Activated CD4-positive, alpha-beta T cell treated with anti-CD3 and anti-CD28 coated beads for 36 hours (primary cell): ENCODE measurements at regions of chr2 and their contacts with region 1.

Region 1: GRCh38 chr2:231514103-231514950 is 15.9 kb downstream of the NMUR1 start:
- DNase-seq: peak; percentile 99
- ATAC-seq: peak; percentile 99
- H3K4me3 Mint-ChIP-seq: peak overlapping the region; percentile 83
- H3K27ac Mint-ChIP-seq: peak overlapping the region; percentile 95
- H3K4me1 Mint-ChIP-seq: peaks cover 13% of the 10 kb centered on the region
- H3K27me3 Mint-ChIP-seq: no peaks in the 10 kb centered on the region

Region 2: DNA sequence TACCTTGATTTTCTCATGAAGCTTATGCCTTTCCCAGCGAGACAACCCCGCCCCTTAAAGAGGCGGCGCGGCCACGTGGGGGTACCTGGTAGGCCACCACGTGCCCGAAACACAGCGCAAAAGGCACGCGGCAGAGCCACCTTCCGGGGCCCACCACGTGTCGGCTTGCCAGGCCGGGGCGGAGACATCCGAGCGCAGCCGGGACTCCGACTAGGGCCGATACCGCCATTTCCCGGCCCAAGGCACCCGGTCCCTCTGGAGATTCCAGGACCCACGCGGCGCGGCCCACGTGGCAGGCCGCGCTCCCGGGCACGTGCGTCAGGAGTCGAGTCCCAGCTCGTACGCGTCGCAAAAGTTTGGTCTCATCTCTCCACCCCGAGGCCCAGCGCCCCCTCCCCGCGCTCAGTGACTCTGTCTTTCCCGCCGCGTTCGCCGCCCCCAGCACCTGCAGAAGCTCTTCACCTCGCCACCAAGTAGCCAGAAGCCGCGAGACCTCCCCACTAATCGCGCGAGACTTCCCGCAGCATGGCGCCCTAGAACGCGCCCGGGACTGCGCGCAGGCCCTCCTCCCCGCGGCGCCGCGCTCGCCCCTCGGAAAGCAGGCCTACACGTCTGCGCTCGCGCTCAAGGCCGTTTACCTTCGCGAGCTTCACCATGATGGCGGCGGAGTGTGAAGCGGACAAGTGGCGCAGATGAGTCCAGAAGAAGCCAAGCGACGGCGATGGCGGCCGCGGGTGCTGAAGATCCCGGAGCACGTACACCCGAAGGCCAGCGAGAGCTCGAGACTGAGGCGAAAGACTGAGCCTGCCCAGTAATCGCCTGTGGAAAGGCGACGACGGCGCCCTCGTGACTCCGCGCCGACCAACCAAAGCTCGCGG is 50.4 kb before region 1 on chr2 and contains the start of gene NCL:
- CTCF ChIA-PET with region 1: interaction called, 5 read pairs
- POLR2A ChIA-PET with region 1: interaction called, 15 read pairs
- intact Hi-C with region 1: loop called (anchors 1 kb)
- DNase-seq: peak; percentile 92
- ATAC-seq: peak; percentile 93
- H3K4me3 Mint-ChIP-seq: peak within 1 kb of the TSS; percentile 98
- H3K27ac Mint-ChIP-seq: peak within 1 kb of the TSS; percentile 99
- H3K4me1 Mint-ChIP-seq: peaks cover 42% of the 10 kb centered on the region
- H3K27me3 Mint-ChIP-seq: no peaks in the 10 kb centered on the region
- total RNA-seq, gene NCL: 1,311 to 1,332 TPM

Region 3: GRCh38 chr2:231530091-231531011 is 16.0 kb after region 1 on chr2 and contains the start of gene NMUR1:
- CTCF ChIA-PET with region 1: interaction called, 14 read pairs
- POLR2A ChIA-PET with region 1: no interaction called
- intact Hi-C with region 1: no loop called
- DNase-seq: peak; percentile 85
- ATAC-seq: peak; percentile 98
- H3K4me3 Mint-ChIP-seq: no peak within 1 kb of the TSS
- H3K27ac Mint-ChIP-seq: no peak within 1 kb of the TSS
- H3K4me1 Mint-ChIP-seq: peaks cover 7% of the 10 kb centered on the region
- H3K27me3 Mint-ChIP-seq: peaks cover 24% of the 10 kb centered on the region
- total RNA-seq, gene NMUR1: not detected

Region 4: DNA sequence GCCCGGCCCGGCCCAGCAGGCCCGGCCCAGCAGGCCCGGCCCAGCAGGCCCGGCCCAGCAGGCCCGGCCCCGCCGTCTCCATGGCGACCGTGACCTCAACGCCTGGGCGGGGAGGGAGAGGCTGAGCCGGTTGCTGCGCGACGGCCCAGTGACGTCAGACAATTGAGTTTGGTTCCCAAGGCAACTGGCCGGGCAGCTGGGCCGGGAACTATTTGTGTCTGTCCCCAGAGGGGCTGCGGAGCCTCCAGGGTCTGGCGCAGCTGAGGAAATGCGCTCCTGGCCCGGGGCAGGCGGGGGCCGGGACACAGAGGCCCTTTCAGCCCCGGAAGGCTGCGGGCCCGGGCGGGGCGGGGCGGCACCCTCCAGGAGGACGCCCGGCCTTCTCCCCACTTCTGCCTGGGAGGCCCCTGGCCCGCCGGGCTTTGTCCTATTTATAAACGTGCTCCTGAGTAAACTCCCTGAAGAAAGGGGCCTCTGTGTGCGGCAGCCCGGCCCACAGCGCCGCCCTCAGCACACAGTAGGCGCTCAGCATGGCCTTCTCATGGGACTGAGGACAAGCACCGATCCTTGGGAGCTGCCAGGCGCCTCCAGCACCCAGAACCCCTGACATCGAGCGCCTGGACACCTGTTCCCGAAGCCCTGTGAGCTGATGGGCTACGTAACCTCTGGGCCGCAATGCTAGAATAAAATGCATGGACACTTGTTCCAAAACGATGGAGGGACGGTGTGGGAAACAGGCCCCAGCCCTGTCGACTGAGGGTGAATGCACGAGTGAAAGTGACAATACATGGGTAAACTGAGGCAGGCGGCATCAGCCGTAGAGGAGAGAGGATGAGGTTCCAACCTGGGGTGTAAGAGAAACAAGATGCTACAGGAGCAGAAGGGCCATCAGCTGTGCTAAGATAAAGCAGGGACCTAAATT is 90.6 kb after region 1 on chr2:
- CTCF ChIA-PET with region 1: interaction called, 17 read pairs
- POLR2A ChIA-PET with region 1: no interaction called
- intact Hi-C with region 1: loop called (anchors 1 to 2 kb)
- DNase-seq: peak; percentile 98
- ATAC-seq: peak; percentile 81
- H3K4me3 Mint-ChIP-seq: peak overlapping the region; percentile 26
- H3K27ac Mint-ChIP-seq: no peak overlapping the region
- H3K4me1 Mint-ChIP-seq: peaks cover 6% of the 10 kb centered on the region
- H3K27me3 Mint-ChIP-seq: peaks cover 2% of the 10 kb centered on the region

Region 5: DNA sequence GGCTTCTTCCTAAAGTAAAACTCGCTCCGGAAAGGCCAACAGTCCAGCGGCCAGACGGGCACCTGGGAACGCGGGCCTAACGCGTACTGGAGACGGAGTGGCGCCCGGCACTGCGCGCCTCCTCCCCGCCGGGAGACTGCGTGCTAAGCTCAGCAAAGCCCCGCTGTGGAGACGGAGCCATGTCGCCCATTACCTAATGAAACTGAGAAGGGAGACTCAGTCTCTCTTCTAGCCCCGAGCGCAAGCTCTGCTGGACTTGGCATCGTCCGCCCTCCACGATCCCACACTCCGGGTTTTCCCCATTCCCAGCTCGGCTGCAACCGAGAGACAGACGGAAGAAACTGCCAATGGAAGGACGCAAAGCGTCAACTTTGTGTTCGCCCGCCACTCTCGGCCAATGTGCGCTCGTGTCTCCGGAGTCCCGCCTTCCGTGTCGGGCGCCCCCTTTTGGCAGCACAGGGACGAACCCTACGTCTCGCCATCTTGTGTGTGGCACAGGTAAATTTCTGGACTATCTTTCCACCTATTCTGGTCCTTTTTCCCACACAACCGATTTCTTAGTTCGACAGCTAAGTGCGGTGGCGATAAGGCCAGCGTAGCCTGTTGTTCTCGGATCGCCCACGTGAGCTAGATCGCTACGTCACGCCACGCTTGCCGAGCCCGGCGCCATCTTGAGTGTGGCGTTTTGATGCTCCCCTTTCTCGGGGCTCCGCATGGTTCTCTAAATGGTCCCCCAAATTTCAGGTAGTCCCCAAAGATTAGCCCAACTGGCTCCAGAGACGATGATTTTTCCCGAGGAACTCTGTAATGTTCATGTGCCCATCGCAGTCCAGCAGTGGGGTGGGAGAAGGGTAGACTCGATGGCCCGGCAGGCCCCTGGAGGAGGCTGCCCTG is 192.7 kb after region 1 on chr2:
- CTCF ChIA-PET with region 1: interaction called, 3 read pairs
- POLR2A ChIA-PET with region 1: interaction called, 4 read pairs
- intact Hi-C with region 1: loop called in 1 of 2 experiments (anchors 1 kb)
- DNase-seq: peak; percentile 99
- ATAC-seq: peak; percentile 59
- H3K4me3 Mint-ChIP-seq: peak overlapping the region; percentile 85
- H3K27ac Mint-ChIP-seq: peak overlapping the region; percentile 100
- H3K4me1 Mint-ChIP-seq: peaks cover 15% of the 10 kb centered on the region
- H3K27me3 Mint-ChIP-seq: peaks cover 2% of the 10 kb centered on the region

Region 6: DNA sequence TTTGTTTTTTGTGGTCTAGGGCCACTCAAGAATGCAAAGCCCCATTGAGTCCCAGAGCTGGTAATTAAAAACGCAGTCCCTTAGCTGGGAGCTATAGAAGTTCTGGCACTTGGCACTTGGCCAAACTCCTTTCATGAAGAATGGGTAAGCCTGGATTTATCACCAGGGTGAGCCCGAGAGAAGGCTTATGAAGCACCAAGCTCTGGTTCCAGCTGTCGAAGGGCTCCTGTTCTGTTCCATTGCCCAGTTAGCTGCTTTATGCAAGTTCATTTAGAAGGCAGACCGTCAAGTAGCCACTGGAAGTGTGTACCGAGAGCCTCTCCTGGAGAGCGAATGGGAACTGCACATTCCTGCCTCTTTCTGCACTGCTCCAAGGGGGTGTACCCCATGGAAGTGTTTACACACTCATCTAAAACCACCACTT is 959.2 kb after region 1 on chr2:
- CTCF ChIA-PET with region 1: no interaction called
- POLR2A ChIA-PET with region 1: no interaction called
- intact Hi-C with region 1: no loop called
- DNase-seq: no peak
- ATAC-seq: no peak
- H3K4me3 Mint-ChIP-seq: no peak overlapping the region
- H3K27ac Mint-ChIP-seq: no peak overlapping the region
- H3K4me1 Mint-ChIP-seq: no peaks in the 10 kb centered on the region
- H3K27me3 Mint-ChIP-seq: peaks cover 28% of the 10 kb centered on the region